ENCODE measurements at regions of chr2 and their contacts with region 1.

Region 1: DNA sequence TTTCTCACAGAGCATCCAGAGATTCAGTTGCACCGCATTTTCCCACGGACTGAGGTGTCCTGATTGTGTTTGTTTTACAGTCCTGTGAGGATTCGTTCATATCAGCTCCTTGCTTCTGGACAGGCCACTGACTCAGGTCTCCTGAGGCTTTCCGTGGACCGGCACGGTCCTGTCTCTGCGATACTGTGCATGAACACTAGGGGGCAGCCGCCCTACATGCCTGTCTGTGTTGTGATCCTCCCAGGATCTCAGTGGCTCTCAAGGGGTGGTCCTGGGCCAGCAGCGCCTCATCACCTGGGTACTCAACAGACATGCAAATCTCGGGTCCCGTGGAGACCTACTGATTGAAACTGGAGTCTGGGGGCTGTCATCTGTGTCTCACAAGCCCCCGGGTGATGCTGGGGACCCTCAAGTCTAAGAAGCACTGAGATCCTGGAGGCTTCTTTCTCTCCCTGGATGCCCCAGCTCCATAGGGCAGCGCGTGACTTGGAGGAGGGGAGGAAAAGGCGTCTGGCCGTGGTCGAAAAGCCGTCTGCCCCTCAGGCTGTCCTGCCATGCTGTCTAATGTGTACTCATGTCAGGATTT is 28.9 kb downstream of the IL1R2 start:
- DNase-seq: peak; percentile 85 to 93 (median 89)
- ATAC-seq: peak; percentile 99
- H3K4me3 ChIP-seq: no peak overlapping the region
- H3K4me1 ChIP-seq: no peaks in the 10 kb centered on the region
- CTCF ChIP-seq: peak; percentile 98

Region 2: GRCh38 chr2:102141970-102142828 is 121.5 kb after region 1 on chr2 and contains the start of gene IL1R1:
- intact Hi-C with region 1: loop called in 1 of 2 experiments (anchors 10 kb)
- DNase-seq: peak; percentile 80 to 88 (median 82)
- ATAC-seq: peak; percentile 96
- H3K4me3 ChIP-seq: peak within 1 kb of the TSS; percentile 27
- H3K4me1 ChIP-seq: peaks cover under 1% of the 10 kb centered on the region
- CTCF ChIP-seq: no peak
- total RNA-seq, gene IL1R1: 17.8 to 40.1 (median 39.1) TPM

Region 3: GRCh38 chr2:102166189-102166845 is 145.6 kb after region 1 on chr2:
- intact Hi-C with region 1: loop called in 1 of 2 experiments (anchors 5 kb)
- DNase-seq: peak in 1 of 3 donors; percentile 64
- ATAC-seq: peak; percentile 90
- H3K4me3 ChIP-seq: no peak overlapping the region
- H3K4me1 ChIP-seq: peaks cover 5% of the 10 kb centered on the region
- CTCF ChIP-seq: peak; percentile 36

Region 4: DNA sequence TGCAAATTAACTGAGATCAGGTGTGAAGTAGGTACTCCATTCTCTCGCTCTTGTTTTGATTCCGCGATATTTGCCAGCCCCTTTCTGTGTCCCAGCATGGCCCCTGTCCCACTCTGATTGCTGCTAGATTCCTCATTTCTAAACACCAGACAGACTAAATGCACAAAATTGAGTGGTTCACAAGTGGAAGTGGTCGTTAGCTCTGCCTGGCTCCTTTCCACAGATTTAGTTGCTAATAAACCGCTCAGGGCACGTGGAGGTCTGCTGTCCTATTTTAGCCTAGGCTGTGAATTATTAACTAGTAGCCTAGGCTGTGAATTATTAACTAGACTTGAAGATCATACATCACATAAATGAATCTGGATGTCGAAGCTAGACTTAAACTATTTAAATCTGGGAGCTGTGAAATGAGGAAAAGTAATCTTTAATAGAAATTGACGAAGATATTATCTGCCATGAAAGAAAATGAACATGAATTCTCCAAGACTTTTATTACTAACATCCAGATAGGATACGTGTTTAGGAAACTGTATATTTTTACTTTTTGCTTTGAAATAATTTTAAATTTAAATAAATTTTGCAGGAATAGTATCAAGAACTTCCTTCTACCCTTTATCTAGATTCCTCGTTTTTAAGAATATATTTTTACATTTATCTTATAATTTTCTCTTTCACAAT is 169.9 kb after region 1 on chr2:
- intact Hi-C with region 1: no loop called
- DNase-seq: peak in 1 of 3 donors; percentile 15
- ATAC-seq: no peak
- H3K4me3 ChIP-seq: no peak overlapping the region
- H3K4me1 ChIP-seq: peaks cover 6% of the 10 kb centered on the region
- CTCF ChIP-seq: no peak

Region 5: GRCh38 chr2:102235491-102235890 is 214.8 kb after region 1 on chr2:
- intact Hi-C with region 1: loop called in 1 of 2 experiments (anchors 5 kb)
- DNase-seq: no peak
- ATAC-seq: peak; percentile 50
- H3K4me3 ChIP-seq: no peak overlapping the region
- H3K4me1 ChIP-seq: no peaks in the 10 kb centered on the region
- CTCF ChIP-seq: no peak

Measured in mucosa of descending colon (tissue), 3 donors.